Ascending aorta (tissue), 2 donors: ENCODE measurements at regions of chr19 and their contacts with region 1.

Region 1: GRCh38 chr19:18659281-18660051 is 22.6 kb downstream of the KLHL26 start:
- DNase-seq: peak in 1 of 2 donors; percentile 83
- H3K4me3 ChIP-seq: peak overlapping the region in 1 of 2 donors; percentile 44
- H3K27ac ChIP-seq: peak overlapping the region; percentile 94 to 95
- H3K4me1 ChIP-seq: peaks cover 26 to 62% of the 10 kb centered on the region in 2 donors
- H3K27me3 ChIP-seq: no peaks in the 10 kb centered on the region
- CTCF ChIP-seq: no peak

Region 2: GRCh38 chr19:18450931-18451845 is 208.3 kb before region 1 on chr19:
- intact Hi-C with region 1: loop called (anchors 10 kb)
- DNase-seq: peak in 1 of 2 donors; percentile 93
- H3K4me3 ChIP-seq: no peak overlapping the region
- H3K27ac ChIP-seq: peak overlapping the region in 1 of 2 donors; percentile 22
- H3K4me1 ChIP-seq: peaks cover 3 to 7% of the 10 kb centered on the region in 2 donors
- H3K27me3 ChIP-seq: no peaks in the 10 kb centered on the region
- CTCF ChIP-seq: peak; percentile 95 to 99 (median 95)

Region 3: GRCh38 chr19:18588611-18589379 is 70.7 kb before region 1 on chr19 and contains the start of gene REX1BD:
- intact Hi-C with region 1: no loop called
- DNase-seq: peak in 1 of 2 donors; percentile 90
- H3K4me3 ChIP-seq: peak within 1 kb of the TSS; percentile 83 to 87
- H3K27ac ChIP-seq: peak within 1 kb of the TSS; percentile 81
- H3K4me1 ChIP-seq: peaks cover 6 to 12% of the 10 kb centered on the region in 2 donors
- H3K27me3 ChIP-seq: no peaks in the 10 kb centered on the region
- CTCF ChIP-seq: peak; percentile 85 to 86 (median 86)
- total RNA-seq, gene REX1BD: 173 TPM

Region 4: DNA sequence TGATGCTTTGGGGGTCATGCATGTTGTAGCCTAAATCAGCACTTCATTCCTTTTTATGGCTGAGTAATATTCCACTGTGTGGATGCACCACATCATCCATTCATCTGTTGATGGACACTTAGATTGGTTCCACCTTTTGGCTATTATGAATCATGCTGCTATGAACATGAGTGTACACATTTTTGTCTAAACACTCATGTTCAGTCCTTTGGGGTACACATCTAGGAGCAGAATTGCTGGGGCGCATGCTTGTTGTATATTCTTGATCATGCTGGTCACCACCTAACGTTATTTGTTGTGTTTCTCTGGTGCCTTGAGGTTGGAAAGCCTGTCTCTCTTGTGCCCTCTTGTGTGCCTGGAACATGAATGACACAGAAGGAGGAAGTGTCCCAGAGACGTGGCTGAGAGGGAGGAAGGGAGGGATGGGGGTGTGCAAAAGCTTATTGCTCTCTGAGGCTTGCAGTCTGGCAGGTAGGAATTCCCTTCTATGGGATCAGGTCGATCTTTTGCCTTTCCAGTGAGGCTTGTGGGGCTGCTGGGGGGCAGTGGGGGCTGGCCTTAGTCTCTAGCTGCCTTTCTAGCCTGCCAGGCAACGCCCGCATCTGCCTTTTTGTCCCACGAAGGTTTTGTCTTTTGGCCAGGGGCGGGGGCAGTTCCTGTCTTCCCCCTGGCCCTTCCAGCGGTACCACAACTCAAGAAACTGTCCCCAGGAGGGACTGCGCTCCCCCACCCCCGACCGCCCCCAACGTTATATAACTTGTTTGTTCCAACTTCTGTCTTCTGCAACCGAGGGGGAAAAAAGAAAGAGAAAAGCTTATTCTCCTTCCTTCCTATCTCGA is 15.1 kb before region 1 on chr19:
- intact Hi-C with region 1: loop called (anchors 2 kb)
- DNase-seq: no peak
- H3K4me3 ChIP-seq: peak overlapping the region; percentile 37 to 50
- H3K27ac ChIP-seq: peak overlapping the region; percentile 82 to 86
- H3K4me1 ChIP-seq: peaks cover 11 to 35% of the 10 kb centered on the region in 2 donors
- H3K27me3 ChIP-seq: no peaks in the 10 kb centered on the region
- CTCF ChIP-seq: peak in 2 of 3 experiments; percentile 26 to 39

Region 5: GRCh38 chr19:18672606-18673337 is 13.3 kb after region 1 on chr19:
- intact Hi-C with region 1: loop called (anchors 1 kb)
- DNase-seq: no peak
- H3K4me3 ChIP-seq: peak overlapping the region in 1 of 2 donors; percentile 38
- H3K27ac ChIP-seq: peak overlapping the region; percentile 50 to 59
- H3K4me1 ChIP-seq: peaks cover 5 to 18% of the 10 kb centered on the region in 2 donors
- H3K27me3 ChIP-seq: no peaks in the 10 kb centered on the region
- CTCF ChIP-seq: peak; percentile 23 to 48 (median 25)